Spleen (tissue), 13 donors: ENCODE measurements at regions of chr14 and their contacts with region 1.

Region 1: DNA sequence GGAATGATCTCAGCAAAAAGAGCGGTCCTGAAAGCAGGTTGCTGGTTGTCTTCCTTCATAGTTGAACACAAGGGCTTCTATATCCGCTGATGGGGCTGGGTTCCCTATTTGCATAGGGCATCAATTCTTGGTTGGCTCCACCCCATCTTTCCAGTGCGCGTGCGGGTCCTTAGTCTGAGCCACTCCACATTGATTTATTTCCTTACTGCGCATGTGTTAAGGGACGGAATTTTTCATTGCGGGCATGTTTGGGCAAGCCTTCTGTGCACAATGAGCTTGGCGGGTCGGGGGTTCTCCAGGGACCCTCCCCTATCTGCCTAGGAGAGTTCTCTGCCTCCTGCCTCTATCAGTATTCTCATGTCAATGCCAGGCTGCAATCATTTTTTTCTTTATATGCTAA is 21.2 kb upstream of the DLGAP5 start:
- DNase-seq: no peak
- H3K4me3 ChIP-seq: no peak overlapping the region
- H3K27ac ChIP-seq: no peak overlapping the region
- H3K4me1 ChIP-seq: peaks cover 0 to 6% (median 1%) of the 10 kb centered on the region in 6 donors
- H3K27me3 ChIP-seq: no peaks in the 10 kb centered on the region
- CTCF ChIP-seq: no peak
- POLR2A ChIP-seq: no peak

Region 2: DNA sequence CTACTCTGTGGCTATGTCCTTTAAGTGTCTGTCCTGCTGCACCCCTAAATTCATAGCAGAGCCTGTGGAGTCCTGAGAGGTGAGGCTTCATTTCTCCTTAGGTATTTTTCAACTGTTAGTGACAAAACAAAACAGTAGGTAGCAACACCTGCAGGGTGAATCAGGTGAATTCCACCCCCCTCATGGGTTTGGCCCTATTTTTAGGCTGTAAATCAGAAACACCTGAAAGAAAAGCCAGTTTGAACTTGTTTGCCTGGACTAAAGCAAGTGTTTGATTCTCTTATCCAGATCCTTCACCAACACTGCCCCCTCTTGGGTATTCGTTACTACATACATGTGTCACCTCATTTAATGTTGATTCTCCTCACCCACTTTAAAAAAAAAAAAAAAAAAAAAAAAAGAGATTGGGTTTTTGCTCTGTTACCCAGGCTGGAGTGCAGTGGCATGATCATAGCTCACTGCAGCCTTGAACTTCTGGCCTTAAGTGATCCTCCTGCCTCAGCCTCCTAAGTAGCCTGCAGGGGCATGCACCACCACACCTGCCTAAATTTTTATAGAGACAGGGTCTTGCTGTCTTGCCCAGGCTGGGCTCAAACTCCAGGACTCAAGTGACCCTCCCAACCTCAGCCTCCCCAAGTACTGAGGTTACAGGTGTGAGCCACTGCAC is 217.5 kb after region 1 on chr14:
- intact Hi-C with region 1: loop called (anchors 10 kb)
- DNase-seq: no peak
- H3K4me3 ChIP-seq: no peak overlapping the region
- H3K27ac ChIP-seq: no peak overlapping the region
- H3K4me1 ChIP-seq: peaks cover 0 to 20% (median 1%) of the 10 kb centered on the region in 6 donors
- H3K27me3 ChIP-seq: no peaks in the 10 kb centered on the region
- CTCF ChIP-seq: peak in 8 of 11 experiments; percentile 24 to 65 (median 40)
- POLR2A ChIP-seq: no peak